ENCODE measurements at regions of chr22 and their contacts with region 1.

Region 1: GRCh38 chr22:43001271-43002201 is 13.4 kb downstream of the PACSIN2 start:
- DNase-seq: peak in 2 of 3 donors; percentile 60 to 72
- H3K4me3 ChIP-seq: peak overlapping the region in 2 of 7 experiments; percentile 6 to 14
- H3K27ac ChIP-seq: peak overlapping the region in 1 of 2 experiments; percentile 45
- H3K4me1 ChIP-seq: peaks cover 11 to 86% (median 51%) of the 10 kb centered on the region in 4 experiments
- H3K27me3 ChIP-seq: no peaks in the 10 kb centered on the region

Region 2: GRCh38 chr22:42959576-42960509 is 41.7 kb before region 1 on chr22:
- CTCF ChIA-PET with region 1: no interaction called
- POLR2A ChIA-PET with region 1: no interaction called
- DNase-seq: peak; percentile 43 to 51 (median 48)
- H3K4me3 ChIP-seq: peak overlapping the region in 4 of 7 experiments; percentile 40 to 52 (median 42)
- H3K27ac ChIP-seq: peak overlapping the region in 1 of 2 experiments; percentile 11
- H3K4me1 ChIP-seq: peaks cover 24 to 56% (median 43%) of the 10 kb centered on the region in 4 experiments
- H3K27me3 ChIP-seq: no peaks in the 10 kb centered on the region

Region 3: GRCh38 chr22:42990139-42990767 is 11.3 kb before region 1 on chr22:
- CTCF ChIA-PET with region 1: interaction called, 10 read pairs
- POLR2A ChIA-PET with region 1: no interaction called
- DNase-seq: peak in 1 of 3 donors; percentile 31
- H3K4me3 ChIP-seq: no peak overlapping the region
- H3K27ac ChIP-seq: no peak overlapping the region
- H3K4me1 ChIP-seq: peaks cover 0 to 26% (median 20%) of the 10 kb centered on the region in 4 experiments
- H3K27me3 ChIP-seq: no peaks in the 10 kb centered on the region

Region 4: GRCh38 chr22:43110927-43111623 is 109.5 kb after region 1 on chr22:
- CTCF ChIA-PET with region 1: no interaction called
- POLR2A ChIA-PET with region 1: no interaction called
- DNase-seq: peak in 2 of 3 donors; percentile 45 to 56
- H3K4me3 ChIP-seq: peak overlapping the region; percentile 37 to 69 (median 54)
- H3K27ac ChIP-seq: no peak overlapping the region
- H3K4me1 ChIP-seq: peaks cover 0 to 45% (median 33%) of the 10 kb centered on the region in 4 experiments
- H3K27me3 ChIP-seq: peaks cover 0 to 30% (median 7%) of the 10 kb centered on the region in 5 experiments

Measured in common myeloid progenitor, CD34-positive (primary cell).